MCF 10A (cell line): ENCODE measurements at regions of chr14 and their contacts with region 1.

Region 1: DNA sequence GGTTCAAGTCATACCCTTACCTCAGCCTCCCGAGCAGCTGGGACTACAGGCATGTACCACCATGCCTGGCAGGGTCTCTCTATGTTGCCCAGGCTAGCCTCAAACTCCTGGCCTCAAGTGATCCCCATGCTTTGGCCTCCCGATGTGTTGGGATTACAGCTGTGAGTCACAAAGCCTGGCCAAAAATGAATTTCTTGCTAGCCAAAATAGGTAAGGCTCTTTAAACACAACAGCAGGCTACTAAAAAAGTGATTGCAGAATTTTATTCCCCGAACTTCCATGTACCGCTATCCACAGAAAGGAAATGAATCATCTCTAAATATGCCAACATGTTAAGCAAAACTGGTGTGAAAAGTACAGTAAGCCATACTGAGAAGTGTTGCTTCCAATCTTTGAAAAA is 50.6 kb downstream of the WDHD1 start:
- DNase-seq: peak; percentile 90
- H3K4me3 Mint-ChIP-seq: no peak overlapping the region
- H3K27ac Mint-ChIP-seq: peak overlapping the region; percentile 67
- H3K4me1 Mint-ChIP-seq: no peaks in the 10 kb centered on the region
- H3K27me3 Mint-ChIP-seq: no peaks in the 10 kb centered on the region
- CTCF ChIP-seq: no peak

Region 2: DNA sequence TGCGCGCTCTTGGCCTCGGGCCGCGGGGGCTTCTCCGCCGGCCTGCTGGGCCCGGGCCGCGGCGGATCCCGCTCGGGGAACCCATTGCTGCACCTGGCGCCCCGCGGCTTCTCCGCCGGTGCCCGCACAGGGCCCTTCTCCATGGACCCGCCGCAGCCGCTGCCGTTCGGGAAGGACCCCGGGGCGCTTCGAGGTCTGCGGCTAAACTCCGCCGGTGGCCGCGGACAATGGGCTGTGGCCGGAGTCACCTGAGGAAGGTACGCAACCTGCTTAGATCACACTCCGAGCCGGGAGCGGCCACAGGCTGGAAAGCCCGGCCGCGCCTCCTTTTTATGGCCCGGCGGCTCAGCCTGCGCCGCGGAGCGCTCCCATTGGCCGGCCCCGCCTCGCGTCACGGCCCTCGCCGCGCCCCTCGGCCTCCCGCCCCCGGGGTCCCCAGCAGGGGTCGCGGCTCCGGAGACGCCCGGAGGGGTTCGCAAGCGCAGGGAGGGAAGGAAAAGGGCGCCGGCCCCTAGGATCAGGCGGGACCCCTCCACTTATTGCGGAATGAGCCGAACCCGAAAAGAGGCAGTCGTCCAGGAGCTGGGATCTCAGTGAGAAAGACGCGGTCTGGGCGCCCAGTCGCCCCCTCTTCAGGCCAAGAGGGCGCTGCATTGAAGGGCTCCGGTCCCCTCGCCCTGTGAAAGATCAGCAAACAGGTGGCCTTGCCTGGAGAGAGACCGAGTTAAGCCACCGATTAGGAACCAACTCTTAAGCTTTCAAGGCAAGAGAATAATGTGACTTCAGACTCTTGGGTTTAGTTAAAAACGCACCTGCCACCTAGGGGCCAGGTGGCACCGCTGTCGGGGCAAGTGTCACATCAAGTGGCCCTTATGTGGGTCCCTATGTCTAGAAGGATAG is 73.5 kb before region 1 on chr14 and contains the start of gene GCH1:
- CTCF ChIA-PET with region 1: interaction called, 4 read pairs
- POLR2A ChIA-PET with region 1: interaction called, 3 read pairs
- intact Hi-C with region 1: loop called (anchors 5 kb)
- DNase-seq: peak; percentile 60
- H3K4me3 Mint-ChIP-seq: peak within 1 kb of the TSS; percentile 75
- H3K27ac Mint-ChIP-seq: no peak within 1 kb of the TSS
- H3K4me1 Mint-ChIP-seq: no peaks in the 10 kb centered on the region
- H3K27me3 Mint-ChIP-seq: no peaks in the 10 kb centered on the region
- CTCF ChIP-seq: peak; percentile 8
- total RNA-seq, gene GCH1: 7.1 and 8.6 TPM in 2 replicates

Region 3: DNA sequence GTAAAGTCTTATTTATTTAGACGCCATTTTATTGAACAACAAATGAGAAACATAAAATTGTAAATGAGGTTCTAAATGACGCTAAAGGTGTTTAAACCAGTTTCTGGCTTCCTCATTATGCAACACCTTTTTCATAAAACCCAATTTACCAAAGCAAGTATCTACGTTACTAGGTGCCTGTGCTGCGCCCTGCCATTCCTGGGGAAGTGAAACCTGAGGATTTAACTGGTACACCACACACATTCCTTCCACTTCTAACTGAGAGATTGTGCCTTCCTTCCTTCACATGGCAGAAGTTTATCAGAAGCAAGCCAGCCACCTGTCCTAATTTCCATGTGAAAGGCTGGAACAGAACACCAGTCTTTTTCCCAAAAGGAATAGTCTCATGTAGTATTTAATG is 33.4 kb before region 1 on chr14:
- CTCF ChIA-PET with region 1: no interaction called
- POLR2A ChIA-PET with region 1: no interaction called
- intact Hi-C with region 1: no loop called
- DNase-seq: no peak
- H3K4me3 Mint-ChIP-seq: no peak overlapping the region
- H3K27ac Mint-ChIP-seq: no peak overlapping the region
- H3K4me1 Mint-ChIP-seq: no peaks in the 10 kb centered on the region
- H3K27me3 Mint-ChIP-seq: no peaks in the 10 kb centered on the region
- CTCF ChIP-seq: no peak